CD8-positive, alpha-beta T cell (primary cell): ENCODE measurements at regions of chr21 and their contacts with region 1.

Region 1: DNA sequence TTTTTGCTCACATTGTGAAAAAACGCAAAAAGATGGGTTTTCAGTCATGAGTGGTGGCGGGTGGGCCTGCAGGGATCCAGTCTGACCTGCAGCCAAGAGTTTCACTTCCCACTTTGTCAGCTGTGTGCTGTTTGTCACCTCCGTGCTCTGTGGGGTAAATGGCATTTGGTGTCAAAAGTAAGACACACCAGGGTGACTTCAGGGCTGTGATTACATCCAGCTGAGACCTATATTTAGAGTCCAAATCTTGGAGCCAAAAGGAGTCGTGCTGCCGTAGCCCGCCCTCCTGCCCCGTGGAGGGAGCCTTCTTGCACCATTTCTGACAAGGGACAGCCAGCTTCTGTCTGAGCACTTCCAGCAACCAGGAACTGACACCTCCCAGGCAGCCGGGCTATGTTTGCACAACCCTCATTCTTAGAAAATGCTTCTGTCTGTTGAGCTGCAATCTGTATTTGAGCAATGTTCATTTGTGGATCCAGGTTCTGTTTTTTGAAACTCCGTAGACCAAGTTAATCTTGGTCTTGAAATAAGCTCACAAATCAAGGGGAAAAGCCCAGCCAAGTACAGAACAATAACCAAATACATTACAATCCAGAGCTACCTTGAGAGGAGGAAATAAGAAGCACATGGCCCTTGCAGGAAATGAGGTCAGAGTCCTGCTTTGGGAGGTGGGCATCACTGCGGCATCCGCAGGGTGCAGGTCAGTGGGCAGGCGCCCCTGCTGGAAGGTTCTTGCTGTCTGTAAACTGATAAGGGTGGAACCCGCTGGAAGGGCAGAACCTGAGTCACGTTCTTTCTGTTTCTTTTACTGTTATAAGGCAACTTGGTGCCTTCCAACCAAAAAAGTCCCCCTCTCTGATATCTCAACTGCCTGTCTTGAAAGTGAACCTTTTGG is 14.4 kb downstream of the ABCG1 start:
- DNase-seq: peak; percentile 49 to 95 (median 72)
- ATAC-seq: peak; percentile 57
- H3K4me3 ChIP-seq: peak overlapping the region in 1 of 2 experiments; percentile 1
- H3K4me3 Mint-ChIP-seq: peak overlapping the region; percentile 70
- H3K27ac ChIP-seq: peak overlapping the region; percentile 69 to 93
- H3K27ac Mint-ChIP-seq: peak overlapping the region; percentile 95
- H3K4me1 ChIP-seq: peaks cover 80% of the 10 kb centered on the region
- H3K4me1 Mint-ChIP-seq: peaks cover 94% of the 10 kb centered on the region
- H3K27me3 ChIP-seq: no peaks in the 10 kb centered on the region
- H3K27me3 Mint-ChIP-seq: no peaks in the 10 kb centered on the region
- CTCF ChIP-seq: peak; percentile 50

Region 2: GRCh38 chr21:42187976-42188653 is 45.2 kb before region 1 on chr21:
- CTCF ChIA-PET with region 1: interaction called, 6 read pairs
- POLR2A ChIA-PET with region 1: interaction called, 8 read pairs
- intact Hi-C with region 1: loop called (anchors 1 to 2 kb)
- DNase-seq: peak; percentile 58 to 95 (median 80)
- ATAC-seq: peak; percentile 85
- H3K4me3 ChIP-seq: peak overlapping the region; percentile 11 to 22
- H3K4me3 Mint-ChIP-seq: peak overlapping the region; percentile 74
- H3K27ac ChIP-seq: peak overlapping the region; percentile 63 to 85
- H3K27ac Mint-ChIP-seq: peak overlapping the region; percentile 97
- H3K4me1 ChIP-seq: peaks cover 86% of the 10 kb centered on the region
- H3K4me1 Mint-ChIP-seq: peaks cover 77% of the 10 kb centered on the region
- H3K27me3 ChIP-seq: no peaks in the 10 kb centered on the region
- H3K27me3 Mint-ChIP-seq: no peaks in the 10 kb centered on the region
- CTCF ChIP-seq: no peak

Region 3: DNA sequence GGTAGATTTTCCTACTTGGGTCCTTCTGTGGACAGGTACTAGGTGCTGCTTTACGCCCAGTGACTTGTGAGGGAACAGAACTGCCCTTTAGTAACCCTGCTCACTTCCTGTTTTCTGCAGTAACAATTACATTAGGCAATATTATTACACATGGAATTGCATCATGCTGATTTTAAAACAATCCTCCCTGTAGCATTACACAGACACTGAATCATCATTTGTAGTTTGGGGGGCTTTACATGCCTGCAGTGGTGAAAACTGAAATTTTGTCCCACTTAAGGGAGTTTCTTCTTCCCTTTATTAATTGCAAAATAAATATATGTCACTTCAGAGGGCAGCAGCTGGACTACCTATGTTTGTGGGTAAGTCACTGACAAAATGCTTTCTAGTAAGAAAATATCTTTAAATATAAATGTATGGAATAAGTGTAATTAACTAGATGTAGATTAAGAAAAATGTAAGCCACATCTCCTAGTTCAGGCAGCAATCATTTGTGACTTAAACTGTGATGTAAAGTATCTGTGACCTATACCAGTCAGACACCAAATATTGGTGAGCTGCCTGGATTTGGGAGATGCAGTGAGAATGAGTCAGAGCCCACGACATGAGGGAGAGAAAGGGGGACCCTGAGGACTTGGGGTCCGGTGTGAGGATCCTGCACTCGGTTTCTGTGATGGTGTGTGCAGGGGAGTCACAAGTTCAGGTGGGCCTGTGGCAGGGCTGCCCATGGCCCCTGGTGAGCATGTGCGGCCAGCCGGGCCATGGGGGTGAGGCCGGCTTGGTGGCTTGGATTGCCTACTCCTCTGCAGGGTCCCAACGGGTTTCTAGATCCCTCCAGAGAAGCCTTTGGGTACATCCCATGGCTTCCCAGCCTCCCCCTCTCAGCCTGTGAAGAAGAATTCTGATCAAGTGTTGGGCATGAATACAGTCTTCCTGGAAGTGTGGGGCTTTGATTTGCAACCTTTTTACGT is 33.5 kb before region 1 on chr21:
- CTCF ChIA-PET with region 1: interaction called, 5 read pairs
- POLR2A ChIA-PET with region 1: interaction called, 3 read pairs
- intact Hi-C with region 1: loop called in 1 of 2 experiments (anchors 2 kb)
- DNase-seq: peak in 4 of 9 experiments; percentile 34 to 76 (median 48)
- ATAC-seq: peak; percentile 77
- H3K4me3 ChIP-seq: no peak overlapping the region
- H3K4me3 Mint-ChIP-seq: peak overlapping the region; percentile 5
- H3K27ac ChIP-seq: peak overlapping the region; percentile 15 to 40
- H3K27ac Mint-ChIP-seq: peak overlapping the region; percentile 89
- H3K4me1 ChIP-seq: peaks cover 39% of the 10 kb centered on the region
- H3K4me1 Mint-ChIP-seq: peaks cover 68% of the 10 kb centered on the region
- H3K27me3 ChIP-seq: no peaks in the 10 kb centered on the region
- H3K27me3 Mint-ChIP-seq: no peaks in the 10 kb centered on the region
- CTCF ChIP-seq: no peak

Region 4: GRCh38 chr21:42440187-42440792 is 207.0 kb after region 1 on chr21:
- CTCF ChIA-PET with region 1: no interaction called
- POLR2A ChIA-PET with region 1: no interaction called
- intact Hi-C with region 1: loop called in 1 of 2 experiments (anchors 10 kb)
- DNase-seq: peak in 1 of 9 experiments; percentile 31
- ATAC-seq: no peak
- H3K4me3 ChIP-seq: no peak overlapping the region
- H3K4me3 Mint-ChIP-seq: no peak overlapping the region
- H3K27ac ChIP-seq: peak overlapping the region in 1 of 2 experiments; percentile 51
- H3K27ac Mint-ChIP-seq: peak overlapping the region; percentile 84
- H3K4me1 ChIP-seq: peaks cover 26% of the 10 kb centered on the region
- H3K4me1 Mint-ChIP-seq: peaks cover 47% of the 10 kb centered on the region
- H3K27me3 ChIP-seq: peaks cover 0 to 4% of the 10 kb centered on the region in 2 experiments
- H3K27me3 Mint-ChIP-seq: no peaks in the 10 kb centered on the region
- CTCF ChIP-seq: no peak